Mucosa of descending colon (tissue), 3 donors: ENCODE measurements at regions of chr7 and their contacts with region 1.

Region 1: GRCh38 chr7:82044497-82045080 is 274.7 kb upstream of the HGF start:
- DNase-seq: peak in 1 of 3 donors; percentile 60
- ATAC-seq: no peak
- H3K4me3 ChIP-seq: no peak overlapping the region
- H3K4me1 ChIP-seq: no peaks in the 10 kb centered on the region
- CTCF ChIP-seq: peak; percentile 10

Region 2: DNA sequence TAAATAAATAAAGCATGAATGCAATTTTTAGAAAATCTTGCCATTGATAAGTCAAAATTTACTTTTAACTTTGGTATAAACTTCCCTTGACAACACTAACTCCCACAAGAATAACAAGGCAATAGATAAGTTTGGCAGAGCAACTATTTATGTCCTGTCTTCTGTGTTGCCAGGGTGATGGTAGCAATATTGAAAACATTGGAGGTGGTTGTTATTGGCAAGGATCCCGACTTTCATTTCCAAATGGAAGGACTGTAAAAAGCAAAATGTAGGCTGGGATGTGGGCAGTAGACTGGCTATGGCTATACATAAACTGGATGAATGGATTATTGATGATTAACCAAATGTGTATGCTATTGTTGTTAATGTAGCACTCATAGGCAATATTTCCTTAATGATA is 533.8 kb after region 1 on chr7:
- intact Hi-C with region 1: loop called in 1 of 2 experiments (anchors 5 kb)
- DNase-seq: no peak
- ATAC-seq: no peak
- H3K4me3 ChIP-seq: no peak overlapping the region
- H3K4me1 ChIP-seq: no peaks in the 10 kb centered on the region
- CTCF ChIP-seq: no peak